Aorta (tissue), 5 donors: ENCODE measurements at regions of chr3 and their contacts with region 1.

Region 1: DNA sequence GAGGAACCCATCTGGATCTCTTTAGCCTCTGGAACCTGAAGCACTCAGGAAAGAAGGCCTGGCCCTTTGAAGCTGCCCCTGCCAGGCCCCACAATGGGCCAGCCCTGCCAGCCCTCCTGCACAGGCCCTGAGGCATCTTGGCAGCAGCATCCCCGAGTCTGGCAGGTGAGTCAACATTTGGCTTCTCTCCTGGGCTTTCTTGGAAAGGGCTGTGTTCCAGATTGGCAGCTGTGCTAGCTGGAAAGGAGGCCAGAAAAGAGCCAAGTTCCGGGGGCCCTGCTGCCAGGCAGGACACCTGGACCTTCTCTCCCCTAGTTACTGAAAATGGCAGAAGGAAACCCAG is 187.2 kb downstream of the SHQ1 start:
- DNase-seq: peak; percentile 81 to 86
- ATAC-seq: peak; percentile 73
- H3K4me3 ChIP-seq: no peak overlapping the region
- H3K27ac ChIP-seq: no peak overlapping the region
- H3K4me1 ChIP-seq: peaks cover 0 to 2% of the 10 kb centered on the region in 2 donors
- H3K27me3 ChIP-seq: no peaks in the 10 kb centered on the region

Region 2: GRCh38 chr3:71962561-71963240 is 698.4 kb before region 1 on chr3:
- intact Hi-C with region 1: no loop called
- DNase-seq: no peak
- ATAC-seq: no peak
- H3K4me3 ChIP-seq: no peak overlapping the region
- H3K27ac ChIP-seq: no peak overlapping the region
- H3K4me1 ChIP-seq: no peaks in the 10 kb centered on the region
- H3K27me3 ChIP-seq: no peaks in the 10 kb centered on the region

Region 3: DNA sequence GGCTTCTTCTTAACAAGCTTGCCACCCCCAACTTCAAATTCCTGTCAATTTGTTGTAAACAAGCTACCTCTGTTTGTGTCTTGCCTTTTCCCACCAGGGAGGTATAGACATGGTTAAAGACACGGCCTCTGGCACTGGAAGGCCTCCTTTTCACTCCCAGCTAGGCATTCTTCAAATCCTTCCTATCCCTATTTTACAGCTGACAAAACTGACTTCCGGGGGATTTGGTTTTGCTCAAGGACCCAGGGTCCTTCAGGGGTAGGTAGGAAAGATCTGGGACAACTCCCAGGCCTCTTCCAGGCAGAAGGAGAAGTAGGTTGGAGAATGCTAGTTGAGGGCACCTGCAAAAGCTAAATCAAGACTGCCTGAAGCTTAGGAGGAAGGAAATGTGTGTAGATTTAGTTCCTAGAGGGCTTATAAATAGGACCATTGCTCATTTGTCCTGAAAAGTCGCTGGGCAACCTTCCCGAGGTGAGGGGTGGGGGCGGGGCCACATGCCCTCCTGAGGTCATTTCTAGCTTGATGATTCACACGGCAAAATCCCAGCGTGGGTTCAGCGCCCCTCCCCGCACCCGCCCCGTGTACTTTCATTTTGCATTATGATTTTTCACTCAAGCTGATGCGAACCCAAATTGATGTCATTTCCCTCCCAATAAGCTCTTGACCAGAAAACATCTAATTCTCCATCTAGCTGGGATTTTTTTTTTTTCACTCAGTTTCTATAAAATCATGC is 178.3 kb before region 1 on chr3:
- intact Hi-C with region 1: loop called in 1 of 2 experiments (anchors 2 kb)
- DNase-seq: peak; percentile 79 to 93
- ATAC-seq: peak; percentile 82
- H3K4me3 ChIP-seq: peak overlapping the region in 1 of 2 donors; percentile 39
- H3K27ac ChIP-seq: peak overlapping the region; percentile 21 to 86
- H3K4me1 ChIP-seq: peaks cover 0 to 8% of the 10 kb centered on the region in 2 donors
- H3K27me3 ChIP-seq: no peaks in the 10 kb centered on the region

Region 4: GRCh38 chr3:72694398-72694797 is 33.3 kb after region 1 on chr3:
- intact Hi-C with region 1: no loop called
- DNase-seq: no peak
- ATAC-seq: no peak
- H3K4me3 ChIP-seq: no peak overlapping the region
- H3K27ac ChIP-seq: no peak overlapping the region
- H3K4me1 ChIP-seq: no peaks in the 10 kb centered on the region
- H3K27me3 ChIP-seq: no peaks in the 10 kb centered on the region